A549 (cell line): ENCODE measurements at regions of chr1 and their contacts with region 1.

Region 1: GRCh38 chr1:11658308-11658941 is 3.7 kb downstream of the FBXO44 start:
- DNase-seq: no peak
- ATAC-seq: no peak
- H3K4me3 ChIP-seq: no peak overlapping the region
- H3K27ac ChIP-seq: no peak overlapping the region
- H3K4me1 ChIP-seq: peaks cover 14% of the 10 kb centered on the region; the same call in 2 of the 3 replicates
- CTCF ChIP-seq: no peak
- EP300 ChIP-seq: no peak
- POLR2A ChIP-seq: no peak
- RAD21 ChIP-seq: no peak

Region 2: GRCh38 chr1:11571906-11572616 is 86.4 kb before region 1 on chr1:
- CTCF ChIA-PET with region 1: no interaction called
- POLR2A ChIA-PET with region 1: no interaction called
- DNase-seq: peak in 1 of 2 experiments; percentile 23
- ATAC-seq: peak; percentile 45 to 69; a peak in 3 of 6 replicates
- H3K4me3 ChIP-seq: no peak overlapping the region
- H3K27ac ChIP-seq: no peak overlapping the region
- H3K4me1 ChIP-seq: no peaks in the 10 kb centered on the region
- CTCF ChIP-seq: no peak
- EP300 ChIP-seq: no peak
- POLR2A ChIP-seq: no peak
- RAD21 ChIP-seq: no peak

Region 3: DNA sequence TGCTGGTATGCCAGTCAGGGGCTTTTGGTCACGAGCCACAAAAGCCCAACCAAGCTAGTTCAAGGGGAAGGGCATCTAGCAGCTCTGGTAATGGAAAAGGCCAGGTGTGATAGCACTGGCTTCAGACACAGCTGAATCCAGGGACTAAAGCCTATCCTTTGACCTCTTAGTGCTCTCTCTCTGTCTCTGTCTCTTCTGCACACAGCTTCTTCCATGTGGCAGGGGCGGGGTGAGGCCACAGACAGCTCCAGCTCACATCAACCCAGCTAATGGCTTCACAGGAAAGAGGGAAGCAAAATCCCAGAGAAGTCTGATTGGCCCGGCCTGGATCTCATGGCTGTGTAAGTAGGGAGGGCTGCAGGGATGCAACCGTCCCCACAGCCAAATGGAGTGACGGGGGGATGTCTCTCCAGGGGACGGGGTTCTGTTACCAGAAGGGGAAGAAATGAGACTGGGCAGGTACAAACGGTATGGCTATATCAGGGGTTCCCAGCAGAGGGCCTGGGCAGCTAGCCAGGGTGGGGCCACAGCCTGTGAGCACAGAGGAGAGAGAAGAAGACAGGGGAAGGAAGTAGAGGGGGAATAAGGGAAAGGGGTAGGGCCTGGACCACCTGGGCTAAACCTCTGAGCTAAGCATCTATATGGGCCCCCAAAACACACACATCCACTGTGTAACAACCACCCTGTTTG is 46.6 kb before region 1 on chr1:
- CTCF ChIA-PET with region 1: no interaction called
- POLR2A ChIA-PET with region 1: no interaction called
- DNase-seq: no peak
- ATAC-seq: 0 out of 6 replicates have a peak, but pooled peaks of 1 of the 2 experiments have one; percentile 57
- H3K4me3 ChIP-seq: no peak overlapping the region
- H3K27ac ChIP-seq: no peak overlapping the region
- H3K4me1 ChIP-seq: no peaks in the 10 kb centered on the region
- CTCF ChIP-seq: no peak
- EP300 ChIP-seq: no peak
- POLR2A ChIP-seq: no peak
- RAD21 ChIP-seq: no peak

Region 4: DNA sequence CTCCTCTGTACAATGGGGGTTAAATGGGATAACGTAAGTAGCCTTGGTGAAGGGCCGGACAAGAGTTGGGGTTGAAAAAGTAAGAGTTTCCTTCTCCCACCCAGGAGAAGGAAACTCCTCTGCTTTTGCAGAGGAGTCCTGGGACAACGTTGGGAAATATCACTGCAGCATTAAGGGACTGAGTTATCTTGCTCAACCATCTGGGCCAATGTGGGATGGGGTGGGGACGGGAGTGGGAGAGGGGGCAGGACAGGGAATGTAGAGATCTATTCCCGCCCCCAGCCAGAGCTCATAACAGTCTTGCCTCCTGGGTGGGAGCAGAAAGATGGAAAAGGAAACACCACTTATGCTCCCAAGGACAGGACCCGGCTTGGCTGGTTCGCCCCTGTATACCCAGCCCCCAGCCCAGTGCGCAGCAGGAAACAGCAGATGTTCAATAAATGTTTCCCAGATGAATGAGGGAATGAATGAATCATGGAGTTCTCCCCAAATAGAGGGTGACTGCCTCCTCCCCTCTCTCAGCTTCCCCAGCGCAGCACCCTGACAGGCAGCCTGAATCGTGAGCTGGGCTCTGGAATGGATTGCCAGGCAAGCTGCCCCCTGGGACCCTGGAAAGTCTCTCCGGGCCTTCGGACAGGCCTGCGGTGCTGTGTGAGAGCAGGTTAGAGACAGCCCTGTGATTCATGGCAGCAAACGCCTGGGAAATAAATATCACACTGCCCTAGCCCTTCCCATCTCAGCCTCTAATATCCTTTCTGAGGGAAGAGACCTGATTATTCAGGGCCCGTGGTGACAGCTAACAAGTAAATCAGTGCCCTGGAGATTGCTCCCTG is 29.0 kb before region 1 on chr1:
- CTCF ChIA-PET with region 1: no interaction called
- POLR2A ChIA-PET with region 1: no interaction called
- DNase-seq: no peak
- ATAC-seq: no peak
- H3K4me3 ChIP-seq: no peak overlapping the region
- H3K27ac ChIP-seq: no peak overlapping the region
- H3K4me1 ChIP-seq: no peaks in the 10 kb centered on the region
- CTCF ChIP-seq: no peak
- EP300 ChIP-seq: no peak
- POLR2A ChIP-seq: no peak
- RAD21 ChIP-seq: no peak

Region 5: DNA sequence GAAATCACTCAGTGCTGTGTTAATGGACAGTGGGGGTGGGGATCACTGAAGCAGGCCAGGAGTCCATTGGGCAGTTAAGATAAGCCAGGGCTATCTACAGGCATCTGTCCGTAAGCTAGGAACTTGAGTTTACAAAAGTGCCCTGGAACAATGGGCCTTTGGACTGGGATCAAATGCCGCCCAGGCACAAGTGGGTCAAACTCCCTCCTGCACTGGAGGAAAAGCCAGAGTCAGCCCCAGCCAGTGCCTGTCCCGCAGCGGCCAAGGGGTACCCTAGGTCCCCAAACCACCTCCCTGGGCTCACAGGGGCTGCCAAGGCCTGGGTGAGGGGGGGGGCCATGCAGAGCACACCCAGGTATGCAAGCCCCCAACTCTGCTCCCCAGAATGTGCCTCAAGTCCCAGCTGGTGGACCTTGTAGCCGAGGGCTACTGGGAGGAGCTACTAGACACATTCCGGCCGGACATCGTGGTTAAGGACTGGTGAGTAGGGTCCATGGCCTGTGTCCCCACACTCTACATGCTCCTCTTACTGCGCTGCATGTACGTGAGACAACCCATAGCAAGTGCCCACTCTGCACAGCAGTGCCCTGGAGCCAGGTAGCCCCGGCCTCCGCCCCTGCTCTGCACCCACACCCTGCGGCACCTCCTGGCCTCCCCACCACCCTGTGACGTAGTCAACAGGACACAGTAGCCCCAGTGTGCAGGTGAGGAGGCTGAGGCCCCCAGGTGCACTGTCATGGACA is 13.3 kb after region 1 on chr1:
- CTCF ChIA-PET with region 1: interaction called, 35 read pairs
- POLR2A ChIA-PET with region 1: no interaction called
- DNase-seq: no peak
- ATAC-seq: no peak
- H3K4me3 ChIP-seq: no peak overlapping the region
- H3K27ac ChIP-seq: no peak overlapping the region
- H3K4me1 ChIP-seq: no peaks in the 10 kb centered on the region
- CTCF ChIP-seq: no peak
- EP300 ChIP-seq: no peak
- POLR2A ChIP-seq: no peak
- RAD21 ChIP-seq: no peak

Region 6: GRCh38 chr1:11768821-11769220 is 110.4 kb after region 1 on chr1:
- CTCF ChIA-PET with region 1: no interaction called
- POLR2A ChIA-PET with region 1: no interaction called
- DNase-seq: no peak
- ATAC-seq: peak in 1 of 2 experiments; percentile 47; a peak in 2 of 6 replicates
- H3K4me3 ChIP-seq: no peak overlapping the region
- H3K27ac ChIP-seq: no peak overlapping the region
- H3K4me1 ChIP-seq: no peaks in the 10 kb centered on the region
- CTCF ChIP-seq: no peak
- EP300 ChIP-seq: no peak
- POLR2A ChIP-seq: no peak
- RAD21 ChIP-seq: no peak